K562 (cell line): ENCODE measurements at regions of chr3 and their contacts with region 1.

Region 1: GRCh38 chr3:49454458-49454857 is 15.6 kb upstream of the DAG1 start:
- DNase-seq: peak; percentile 25 to 67 (median 40)
- ATAC-seq: peak; percentile 98
- H3K4me3 ChIP-seq: no peak overlapping the region
- H3K27ac ChIP-seq: no peak overlapping the region
- H3K4me1 ChIP-seq: no peaks in the 10 kb centered on the region; a peak in 1 of 5 replicates
- H3K27me3 ChIP-seq: no peaks in the 10 kb centered on the region
- CTCF ChIP-seq: peak; percentile 52 to 71 (median 57); a peak in 5 of 6 replicates
- EP300 ChIP-seq: no peak
- POLR2A ChIP-seq: no peak
- RAD21 ChIP-seq: peak; percentile 61 to 77

Region 2: DNA sequence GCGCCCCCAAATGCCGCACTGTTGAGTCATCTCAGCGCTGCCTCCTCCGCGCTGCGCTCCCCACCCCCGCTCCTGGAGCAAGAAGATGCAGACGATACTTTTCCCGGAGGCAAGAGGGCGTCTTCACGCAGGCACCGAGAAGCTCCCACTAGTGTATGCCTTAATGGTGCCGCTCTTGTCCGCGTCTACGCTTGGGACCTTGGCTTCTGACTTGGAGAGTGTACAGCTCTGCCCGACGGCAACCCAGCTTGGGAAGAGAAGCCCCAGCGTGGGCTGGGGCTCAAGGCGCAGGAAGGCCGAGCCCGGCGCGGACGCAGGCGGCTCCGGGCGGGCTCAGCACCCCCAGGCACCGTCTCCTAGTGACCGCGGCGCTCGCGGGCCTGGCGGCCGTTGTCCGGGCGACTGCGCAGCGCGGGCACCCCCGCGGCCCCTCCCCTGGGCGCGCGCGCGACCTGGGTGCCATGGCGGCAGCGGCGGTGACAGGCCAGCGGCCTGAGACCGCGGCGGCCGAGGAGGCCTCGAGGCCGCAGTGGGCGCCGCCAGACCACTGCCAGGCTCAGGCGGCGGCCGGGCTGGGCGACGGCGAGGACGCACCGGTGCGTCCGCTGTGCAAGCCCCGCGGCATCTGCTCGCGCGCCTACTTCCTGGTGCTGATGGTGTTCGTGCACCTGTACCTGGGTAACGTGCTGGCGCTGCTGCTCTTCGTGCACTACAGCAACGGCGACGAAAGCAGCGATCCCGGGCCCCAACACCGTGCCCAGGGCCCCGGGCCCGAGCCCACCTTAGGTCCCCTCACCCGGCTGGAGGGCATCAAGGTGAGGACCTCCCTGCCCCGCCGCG is 464.4 kb before region 1 on chr3 and contains the start of gene P4HTM:
- CTCF ChIA-PET with region 1: interaction called, 3 read pairs
- POLR2A ChIA-PET with region 1: no interaction called
- in situ Hi-C with region 1: no loop called
- intact Hi-C with region 1: loop called (anchors 1 kb)
- DNase-seq: peak; percentile 78 to 88 (median 85)
- ATAC-seq: peak; percentile 93
- H3K4me3 ChIP-seq: peak within 1 kb of the TSS; percentile 41
- H3K27ac ChIP-seq: peak within 1 kb of the TSS; percentile 78
- H3K4me1 ChIP-seq: peaks cover 9 to 21% of the 10 kb centered on the region in 2 experiments
- H3K27me3 ChIP-seq: no peaks in the 10 kb centered on the region
- CTCF ChIP-seq: peak; percentile 58 to 74 (median 64)
- EP300 ChIP-seq: peak; percentile 49; the same call in 1 of the 2 replicates
- POLR2A ChIP-seq: no peak
- RAD21 ChIP-seq: peak in 1 of 2 experiments; percentile 21; a peak in 1 of 4 replicates
- polyA plus RNA-seq, gene P4HTM: not detected

Region 3: DNA sequence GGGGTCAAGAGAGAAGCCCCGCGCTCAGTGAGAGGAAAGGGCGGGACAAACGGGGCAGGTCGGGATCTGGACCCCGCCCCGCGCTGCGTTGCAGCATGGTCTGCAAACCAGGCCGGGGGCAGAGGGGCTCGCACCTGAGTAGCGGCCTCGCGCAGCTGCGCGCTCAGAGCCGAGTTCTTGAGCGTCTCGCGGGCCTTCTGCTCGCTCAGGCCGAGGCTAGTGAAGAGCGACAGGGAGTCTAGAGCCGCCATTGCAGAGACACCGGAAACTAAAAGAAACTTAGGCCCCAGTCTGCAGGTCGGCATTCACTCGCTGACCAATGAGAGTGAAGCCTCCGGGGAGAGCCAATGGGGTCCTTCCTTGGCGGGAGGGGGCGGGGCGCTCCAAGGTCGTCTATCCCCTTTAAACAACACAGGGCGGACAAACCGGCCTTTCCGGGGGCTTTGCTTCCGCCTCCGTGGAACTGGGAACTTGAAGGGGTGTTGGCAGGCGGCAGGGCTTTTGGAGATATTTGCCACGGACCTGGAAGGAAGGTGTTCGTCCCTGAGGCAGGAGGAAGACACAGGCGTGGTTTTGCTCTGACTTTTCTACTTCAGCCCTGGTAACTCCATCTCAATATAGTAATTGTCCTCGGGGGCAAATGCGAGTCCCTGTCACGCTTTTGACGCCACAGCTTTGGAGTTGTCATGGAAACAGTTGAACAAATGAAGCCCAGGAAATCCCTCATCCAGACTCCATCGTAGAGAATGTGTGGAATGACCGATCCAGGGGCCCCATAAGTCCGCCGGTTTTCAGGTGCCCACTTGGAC is 349.8 kb before region 1 on chr3 and contains the start of gene QARS1:
- CTCF ChIA-PET with region 1: no interaction called
- POLR2A ChIA-PET with region 1: no interaction called
- in situ Hi-C with region 1: no loop called
- intact Hi-C with region 1: no loop called
- DNase-seq: peak; percentile 93 to 96 (median 94)
- ATAC-seq: peak; percentile 98
- H3K4me3 ChIP-seq: peak within 1 kb of the TSS; percentile 60
- H3K27ac ChIP-seq: peak within 1 kb of the TSS; percentile 84
- H3K4me1 ChIP-seq: peaks cover 6 to 18% of the 10 kb centered on the region in 2 experiments; a peak in 4 of 5 replicates
- H3K27me3 ChIP-seq: no peaks in the 10 kb centered on the region
- CTCF ChIP-seq: no peak
- EP300 ChIP-seq: no peak
- POLR2A ChIP-seq: peak; percentile 85
- RAD21 ChIP-seq: no peak
- polyA plus RNA-seq, gene QARS1: 230 to 310 TPM

Region 4: DNA sequence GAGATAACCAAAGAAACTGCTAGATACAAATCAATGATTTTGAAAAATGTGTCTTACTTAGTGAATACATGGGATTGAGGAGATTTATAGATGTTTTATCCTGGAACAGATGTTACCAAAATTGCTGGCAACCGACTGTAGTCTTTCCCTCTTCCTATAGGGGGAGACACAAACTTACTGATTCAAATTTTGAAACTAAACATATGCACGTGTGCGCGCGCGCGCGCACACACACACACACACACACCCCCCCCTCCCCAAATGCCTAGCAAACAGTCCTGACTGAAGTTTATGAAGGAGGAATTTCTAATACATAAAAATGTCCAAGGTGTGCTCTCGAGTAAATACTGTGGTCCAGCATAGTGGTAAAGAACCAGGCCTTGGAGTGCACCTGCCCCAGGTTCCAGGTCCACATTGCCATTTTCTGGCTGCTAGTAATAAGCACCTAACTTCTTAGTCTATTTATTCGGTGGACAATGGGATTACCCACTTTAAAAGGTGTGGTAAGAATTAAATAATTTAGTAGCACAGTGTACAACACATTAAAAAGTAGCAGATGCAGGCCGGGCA is 158.9 kb before region 1 on chr3:
- CTCF ChIA-PET with region 1: no interaction called
- POLR2A ChIA-PET with region 1: no interaction called
- in situ Hi-C with region 1: no loop called
- intact Hi-C with region 1: loop called (anchors 1 kb)
- DNase-seq: peak; percentile 25 to 32 (median 28)
- ATAC-seq: peak; percentile 62; the same call in 2 of the 3 replicates
- H3K4me3 ChIP-seq: no peak overlapping the region
- H3K27ac ChIP-seq: no peak overlapping the region
- H3K4me1 ChIP-seq: no peaks in the 10 kb centered on the region; a peak in 1 of 5 replicates
- H3K27me3 ChIP-seq: no peaks in the 10 kb centered on the region
- CTCF ChIP-seq: peak; percentile 28 to 56 (median 53); a peak in 4 of 6 replicates
- EP300 ChIP-seq: no peak
- POLR2A ChIP-seq: no peak
- RAD21 ChIP-seq: peak in 1 of 2 experiments; percentile 54; a peak in 2 of 4 replicates

Region 5: DNA sequence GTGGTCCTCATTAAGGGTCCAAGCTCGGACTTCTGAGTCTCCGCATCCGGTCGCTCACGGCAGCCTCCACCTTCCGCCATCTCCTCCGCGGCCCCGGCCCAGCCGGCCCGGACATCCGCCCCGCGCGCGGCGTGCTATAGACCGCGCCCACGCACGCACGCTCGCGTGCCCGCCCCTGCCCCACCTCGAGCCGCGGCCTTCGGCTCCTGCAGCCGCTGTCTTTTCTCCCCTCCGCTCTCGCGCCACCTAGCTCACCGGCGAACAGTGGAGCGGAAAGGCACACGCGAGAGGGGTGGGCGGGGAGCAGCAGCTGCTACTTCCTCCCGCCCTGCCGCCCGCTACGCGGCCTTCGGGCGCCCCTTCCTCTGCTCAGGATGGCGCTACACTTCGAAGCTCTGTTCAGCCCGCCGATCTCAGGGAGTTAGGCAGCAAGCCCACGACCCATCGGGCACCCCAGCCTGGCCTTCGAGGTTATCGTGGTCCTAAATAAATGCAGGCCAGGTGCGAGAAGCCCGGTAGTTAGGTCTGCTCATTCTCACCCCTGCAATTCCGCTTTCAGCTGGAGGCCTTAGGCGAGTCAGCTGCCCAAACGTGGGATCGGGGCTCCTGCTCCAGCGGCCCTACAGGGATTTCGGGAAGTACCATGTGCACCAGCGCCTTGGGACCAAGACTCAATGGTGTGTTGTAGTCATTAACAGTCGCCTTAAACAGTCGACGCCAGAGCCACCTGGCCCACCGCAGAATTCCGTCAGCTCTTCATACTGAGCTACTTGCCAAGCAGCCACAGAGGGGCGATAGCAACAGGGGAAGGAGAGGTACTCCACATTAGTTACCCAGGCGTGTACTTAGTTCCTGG is 114.3 kb before region 1 on chr3 and contains the start of gene USP4:
- CTCF ChIA-PET with region 1: interaction called, 8 read pairs
- POLR2A ChIA-PET with region 1: no interaction called
- in situ Hi-C with region 1: no loop called
- intact Hi-C with region 1: loop called (anchors 1 kb)
- DNase-seq: peak; percentile 84 to 95 (median 88)
- ATAC-seq: peak; percentile 96
- H3K4me3 ChIP-seq: peak within 1 kb of the TSS; percentile 95
- H3K27ac ChIP-seq: peak within 1 kb of the TSS; percentile 88
- H3K4me1 ChIP-seq: peaks cover 6 to 18% of the 10 kb centered on the region in 2 experiments; a peak in 4 of 5 replicates
- H3K27me3 ChIP-seq: no peaks in the 10 kb centered on the region
- CTCF ChIP-seq: peak; percentile 62 to 75 (median 69)
- EP300 ChIP-seq: peak; percentile 12; the same call in 1 of the 2 replicates
- POLR2A ChIP-seq: peak; percentile 81
- RAD21 ChIP-seq: peak; percentile 64 to 80
- polyA plus RNA-seq, gene USP4: 15.4 to 22.9 TPM

Region 6: DNA sequence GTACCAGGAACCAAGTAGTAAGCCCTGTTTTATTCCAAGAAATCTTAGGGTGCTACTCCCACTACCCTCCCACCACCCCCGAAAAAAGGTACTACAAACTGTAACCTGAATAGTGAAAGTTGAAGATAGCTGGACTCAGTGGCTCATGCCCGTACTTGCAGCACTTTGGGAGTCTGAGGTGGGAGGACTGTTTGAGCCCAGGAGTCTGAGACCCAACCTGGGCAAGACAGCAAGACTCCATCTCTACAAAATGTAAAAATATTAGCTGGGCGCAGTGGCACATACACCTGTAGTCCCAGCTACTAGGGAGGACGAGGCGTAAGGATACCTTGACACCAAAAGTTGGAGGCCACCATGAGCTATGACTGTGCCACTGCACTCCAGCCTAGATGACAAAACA is 50.6 kb before region 1 on chr3:
- CTCF ChIA-PET with region 1: no interaction called
- POLR2A ChIA-PET with region 1: no interaction called
- in situ Hi-C with region 1: no loop called
- intact Hi-C with region 1: no loop called
- DNase-seq: no peak
- ATAC-seq: no peak
- H3K4me3 ChIP-seq: no peak overlapping the region
- H3K27ac ChIP-seq: no peak overlapping the region
- H3K4me1 ChIP-seq: peaks cover 11 to 19% of the 10 kb centered on the region in 2 experiments; a peak in 4 of 5 replicates
- H3K27me3 ChIP-seq: no peaks in the 10 kb centered on the region
- CTCF ChIP-seq: no peak
- EP300 ChIP-seq: no peak
- POLR2A ChIP-seq: no peak
- RAD21 ChIP-seq: no peak

Region 7: GRCh38 chr3:49539659-49540560 is 85.5 kb after region 1 on chr3:
- CTCF ChIA-PET with region 1: no interaction called
- POLR2A ChIA-PET with region 1: no interaction called
- in situ Hi-C with region 1: no loop called
- intact Hi-C with region 1: loop called (anchors 1 kb)
- DNase-seq: peak; percentile 91 to 93 (median 92)
- ATAC-seq: peak; percentile 100
- H3K4me3 ChIP-seq: peak overlapping the region; percentile 45
- H3K27ac ChIP-seq: peak overlapping the region; percentile 40; the same call in 2 of the 3 replicates
- H3K4me1 ChIP-seq: peaks cover 2 to 11% of the 10 kb centered on the region in 2 experiments; a peak in 3 of 5 replicates
- H3K27me3 ChIP-seq: peaks cover 5 to 8% of the 10 kb centered on the region in 2 experiments; a peak in 3 of 5 replicates
- CTCF ChIP-seq: peak; percentile 66 to 85 (median 81)
- EP300 ChIP-seq: no peak
- POLR2A ChIP-seq: peak; percentile 35; the same call in 1 of the 2 replicates
- RAD21 ChIP-seq: peak; percentile 85 to 90

Region 8: DNA sequence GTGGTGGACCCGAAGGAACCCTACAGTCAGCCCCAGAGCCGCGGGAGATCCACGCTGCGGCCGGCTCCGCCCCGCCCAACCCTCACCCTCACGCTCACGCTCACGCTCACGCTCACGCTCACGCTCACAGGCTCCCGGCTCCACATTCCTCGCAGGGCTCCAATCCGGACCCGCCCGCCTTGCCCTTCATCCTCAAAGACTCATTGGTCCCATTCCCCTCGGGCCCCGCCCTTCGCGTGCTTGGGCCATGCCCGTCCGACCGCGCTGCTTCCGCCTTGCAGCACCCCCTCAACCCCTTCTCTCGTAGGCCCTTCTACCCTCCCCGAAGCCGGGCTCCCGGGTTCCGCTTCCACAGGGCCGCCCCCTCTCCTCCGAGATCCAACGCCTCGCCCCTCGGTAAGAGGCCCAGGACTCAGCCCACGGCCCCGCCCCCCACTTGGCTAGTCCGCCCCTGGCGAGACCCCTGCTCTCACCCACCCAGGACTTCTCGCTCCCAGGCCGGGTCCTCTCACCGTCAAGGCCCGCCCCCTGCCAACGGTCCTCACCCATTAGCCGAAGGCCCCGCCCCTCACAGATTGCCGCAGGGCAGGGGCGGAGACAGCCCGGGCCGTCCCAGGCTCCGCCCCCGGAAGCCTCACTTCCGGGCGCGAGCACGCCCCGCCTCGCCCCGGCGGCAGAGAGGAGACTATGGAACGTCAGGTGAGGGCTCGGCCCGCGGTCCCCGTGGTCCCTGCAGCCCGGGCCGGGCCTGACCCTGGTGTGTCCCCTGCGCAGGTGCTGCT is 219.4 kb after region 1 on chr3 and contains the start of gene APEH:
- CTCF ChIA-PET with region 1: no interaction called
- POLR2A ChIA-PET with region 1: no interaction called
- in situ Hi-C with region 1: no loop called
- intact Hi-C with region 1: loop called (anchors 1 kb)
- DNase-seq: peak; percentile 91 to 96 (median 94)
- ATAC-seq: peak; percentile 90
- H3K4me3 ChIP-seq: peak within 1 kb of the TSS; percentile 81
- H3K27ac ChIP-seq: peak within 1 kb of the TSS; percentile 94
- H3K4me1 ChIP-seq: peaks cover 17 to 38% of the 10 kb centered on the region in 2 experiments; a peak in 4 of 5 replicates
- H3K27me3 ChIP-seq: no peaks in the 10 kb centered on the region
- CTCF ChIP-seq: no peak
- EP300 ChIP-seq: no peak; the same call in 1 of the 2 replicates
- POLR2A ChIP-seq: peak; percentile 80
- RAD21 ChIP-seq: no peak
- polyA plus RNA-seq, gene APEH: 70.9 to 72.6 TPM